Left colon (tissue), 2 donors: ENCODE measurements at regions of chr9 and their contacts with region 1.

Region 1: DNA sequence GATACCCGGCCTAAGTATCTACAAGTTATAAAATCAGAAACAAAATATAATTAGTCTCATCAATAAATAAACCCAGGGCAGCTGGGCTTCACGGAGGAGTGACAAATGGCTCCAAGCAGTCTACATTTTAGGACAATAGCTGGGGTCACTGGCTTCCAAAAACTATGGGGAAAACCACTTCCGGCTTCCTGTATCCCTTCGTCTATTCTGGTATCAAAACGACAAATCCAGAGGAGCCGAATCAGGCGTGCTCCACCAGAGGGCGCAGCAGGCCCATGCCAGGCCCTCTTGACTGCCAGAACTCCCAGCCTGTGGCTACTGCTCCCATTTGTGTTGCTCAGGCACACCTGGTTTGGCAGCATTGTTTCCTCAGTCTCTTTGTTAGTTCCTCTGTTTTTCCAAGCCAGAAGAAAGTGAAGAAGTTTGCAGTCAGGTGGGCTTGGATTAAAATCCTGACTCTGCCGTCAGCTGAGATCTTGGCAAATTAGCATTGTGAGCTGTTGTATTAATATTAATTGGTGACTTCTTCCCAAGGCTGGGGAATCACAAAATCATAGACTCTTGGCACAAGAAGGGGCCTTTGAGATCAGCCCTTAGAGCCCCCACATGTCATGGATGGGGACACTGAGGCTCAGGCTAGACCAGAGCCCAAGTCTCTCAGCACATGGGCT is 11.6 kb upstream of the RAB14 start:
- DNase-seq: peak; percentile 82 to 91
- ATAC-seq: peak; percentile 99

Region 2: GRCh38 chr9:121133149-121133816 is 80.0 kb before region 1 on chr9:
- intact Hi-C with region 1: no loop called
- DNase-seq: peak; percentile 63 to 79
- ATAC-seq: peak; percentile 73

Region 3: GRCh38 chr9:121246821-121247561 is 33.7 kb after region 1 on chr9:
- intact Hi-C with region 1: no loop called
- DNase-seq: no peak
- ATAC-seq: no peak

Region 4: DNA sequence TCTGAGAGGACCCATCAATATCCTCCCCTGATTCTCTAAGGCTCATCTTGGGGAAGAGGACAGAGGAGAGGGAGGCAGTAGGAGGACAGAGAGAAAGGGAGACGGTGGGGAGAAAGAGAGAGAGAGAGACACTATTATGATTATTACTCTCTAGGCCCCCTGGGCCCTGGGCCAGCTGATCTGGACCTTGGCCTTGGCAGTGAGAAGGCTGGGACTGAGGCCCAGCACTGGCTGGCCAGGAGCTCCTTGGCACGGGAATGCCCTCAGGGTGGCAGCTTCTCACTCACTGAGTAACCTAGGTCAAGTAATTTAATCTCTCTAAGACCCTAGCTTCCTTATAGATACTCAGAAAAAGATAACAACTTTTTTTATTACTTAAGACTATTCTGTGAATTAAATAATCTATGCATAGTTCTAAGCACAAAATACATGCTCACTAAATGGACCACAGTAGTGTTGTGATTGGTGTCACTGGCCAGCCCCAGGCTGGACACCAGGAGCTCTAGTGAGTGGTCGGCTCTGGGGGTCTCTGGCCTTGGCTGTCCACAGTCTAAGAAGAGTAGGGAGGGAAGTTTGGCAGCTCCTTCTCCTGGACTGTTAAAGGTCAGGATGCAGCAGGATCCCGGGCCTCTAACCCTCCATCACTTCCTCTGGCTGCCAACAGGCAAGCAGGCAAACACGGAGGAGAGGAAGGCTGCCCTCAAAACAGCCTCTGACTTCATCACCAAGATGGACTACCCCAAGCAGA is 104.6 kb after region 1 on chr9:
- intact Hi-C with region 1: loop called in 1 of 2 experiments (anchors 5 kb)
- DNase-seq: peak in 1 of 2 donors; percentile 25
- ATAC-seq: peak; percentile 30

Region 5: DNA sequence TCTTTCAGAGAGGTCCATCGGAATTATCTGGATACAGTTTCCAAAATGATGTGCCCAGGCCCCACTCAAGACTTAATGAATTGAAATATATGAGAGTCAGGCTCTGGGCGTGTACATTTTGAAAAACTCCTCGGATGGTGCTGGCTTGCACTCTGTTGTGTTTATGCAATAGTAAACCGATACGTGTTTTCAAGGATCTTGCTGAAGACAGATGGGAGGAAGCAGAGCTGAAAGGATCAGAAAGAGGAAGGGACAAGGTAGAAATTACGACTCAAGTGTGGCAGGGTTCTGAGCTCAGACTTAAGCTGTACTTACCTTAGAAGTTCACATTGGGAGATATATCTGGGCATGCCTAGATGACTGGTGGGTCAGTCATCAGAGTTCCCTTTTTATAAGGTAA is 170.4 kb after region 1 on chr9:
- intact Hi-C with region 1: loop called in 1 of 2 experiments (anchors 5 kb)
- DNase-seq: no peak
- ATAC-seq: no peak

Region 6: DNA sequence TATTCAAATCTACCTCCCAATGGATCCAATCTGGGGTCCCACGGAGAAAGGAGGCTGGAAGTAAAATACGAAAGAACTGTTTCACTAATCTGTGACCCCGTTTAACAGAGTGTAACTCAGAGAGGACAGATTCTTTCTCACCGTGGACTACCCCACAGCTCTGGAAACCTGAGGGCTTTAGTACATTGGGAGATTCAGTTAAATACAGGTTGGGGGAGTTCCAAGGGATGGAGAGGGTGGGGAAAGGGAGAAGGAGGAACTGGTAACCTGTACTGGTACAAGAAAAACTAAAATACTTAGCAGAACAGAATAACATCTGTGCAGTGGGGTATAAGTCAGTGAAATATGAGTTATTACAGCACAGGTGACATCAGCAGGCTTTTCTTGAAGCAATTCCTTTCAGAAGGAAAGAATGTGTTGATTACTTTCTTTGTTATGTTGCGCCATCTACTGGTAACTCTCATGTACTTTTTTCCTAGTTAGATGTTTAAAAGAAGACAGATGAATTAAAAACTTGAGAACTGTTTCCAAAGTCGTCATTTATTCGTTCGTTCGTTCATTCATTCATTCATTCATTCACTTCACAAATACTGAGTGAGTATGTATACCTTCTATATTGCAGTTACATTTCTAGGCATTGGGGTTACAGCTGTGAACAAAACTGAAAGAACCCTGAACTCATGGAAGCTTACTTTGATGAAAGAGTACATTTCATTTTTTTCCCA is 186.8 kb after region 1 on chr9:
- intact Hi-C with region 1: loop called in 1 of 2 experiments (anchors 5 kb)
- DNase-seq: no peak
- ATAC-seq: peak; percentile 64

Region 7: GRCh38 chr9:121783521-121784507 is 570.5 kb after region 1 on chr9:
- intact Hi-C with region 1: no loop called
- DNase-seq: no peak
- ATAC-seq: no peak